HepG2 (cell line): ENCODE measurements at regions of chr17 and their contacts with region 1.

Region 1: GRCh38 chr17:17919169-17920107 is 52.8 kb downstream of the TOM1L2 start:
- DNase-seq: peak; percentile 75
- ATAC-seq: peak; percentile 75
- H3K4me3 ChIP-seq: no peak overlapping the region
- H3K27ac ChIP-seq: no peak overlapping the region
- H3K4me1 ChIP-seq: peaks cover 49% of the 10 kb centered on the region
- H3K27me3 ChIP-seq: no peaks in the 10 kb centered on the region
- CTCF ChIP-seq: peak; percentile 94
- EP300 ChIP-seq: no peak
- POLR2A ChIP-seq: no peak
- RAD21 ChIP-seq: peak; percentile 90

Region 2: GRCh38 chr17:17859909-17860765 is 59.3 kb before region 1 on chr17:
- CTCF ChIA-PET with region 1: interaction called, 8 read pairs
- POLR2A ChIA-PET with region 1: no interaction called
- in situ Hi-C with region 1: no loop called
- intact Hi-C with region 1: loop called (anchors 2 kb)
- DNase-seq: peak; percentile 57
- ATAC-seq: peak; percentile 88
- H3K4me3 ChIP-seq: no peak overlapping the region
- H3K27ac ChIP-seq: no peak overlapping the region
- H3K4me1 ChIP-seq: peaks cover 44% of the 10 kb centered on the region
- H3K27me3 ChIP-seq: no peaks in the 10 kb centered on the region
- CTCF ChIP-seq: peak; percentile 99
- EP300 ChIP-seq: no peak
- POLR2A ChIP-seq: no peak
- RAD21 ChIP-seq: peak; percentile 96

Region 3: GRCh38 chr17:17890773-17891759 is 28.4 kb before region 1 on chr17:
- CTCF ChIA-PET with region 1: interaction called, 53 read pairs
- POLR2A ChIA-PET with region 1: interaction called, 8 read pairs
- in situ Hi-C with region 1: no loop called
- intact Hi-C with region 1: loop called (anchors 1 kb)
- DNase-seq: peak; percentile 70
- ATAC-seq: peak; percentile 98
- H3K4me3 ChIP-seq: no peak overlapping the region
- H3K27ac ChIP-seq: no peak overlapping the region
- H3K4me1 ChIP-seq: peaks cover 2% of the 10 kb centered on the region
- H3K27me3 ChIP-seq: no peaks in the 10 kb centered on the region
- CTCF ChIP-seq: peak; percentile 97
- EP300 ChIP-seq: no peak
- POLR2A ChIP-seq: no peak
- RAD21 ChIP-seq: peak; percentile 94

Region 4: DNA sequence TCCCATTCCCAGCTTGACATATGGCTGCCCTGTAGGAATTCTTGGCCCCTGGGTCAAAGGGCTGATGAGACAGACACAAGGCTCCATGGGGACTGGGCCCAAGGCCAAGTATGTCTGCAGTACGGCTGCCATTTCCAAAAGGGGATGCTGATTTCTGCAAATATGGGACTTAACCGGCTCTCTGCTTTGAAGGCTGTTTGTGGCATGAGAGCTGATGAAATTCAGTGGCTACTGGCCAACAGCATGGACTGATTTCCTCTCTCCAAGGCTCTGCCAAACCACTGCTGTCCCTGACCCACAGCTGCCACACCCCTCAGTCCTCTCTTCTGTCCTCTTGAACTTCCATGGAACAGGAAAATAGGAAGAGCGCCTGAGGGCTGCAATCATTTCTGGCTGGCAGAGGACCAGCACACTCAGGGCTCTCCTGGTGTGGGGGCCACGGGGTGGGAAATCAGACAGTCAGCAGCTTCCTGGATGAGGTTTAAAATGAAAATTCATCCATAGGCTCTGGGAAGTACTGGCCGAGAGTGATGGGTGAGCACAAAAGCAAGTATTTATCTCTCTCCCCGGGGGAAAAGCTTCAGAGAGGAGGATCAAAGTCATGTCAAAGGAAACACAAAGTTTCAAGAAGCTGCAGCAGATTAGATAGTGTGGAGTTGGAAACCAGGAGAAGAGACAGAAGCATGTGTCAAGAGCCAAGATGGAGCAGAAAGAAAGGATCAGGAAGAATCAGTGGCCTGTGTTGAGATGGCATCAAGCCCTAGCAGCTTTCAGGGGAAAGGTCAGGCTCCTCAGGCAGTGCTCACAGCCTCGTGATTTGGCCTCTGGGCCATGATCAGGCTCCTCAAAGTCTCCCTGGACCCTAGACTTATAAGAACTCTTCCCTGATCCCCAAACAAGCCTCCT is 18.6 kb before region 1 on chr17:
- CTCF ChIA-PET with region 1: no interaction called
- POLR2A ChIA-PET with region 1: interaction called, 12 read pairs
- in situ Hi-C with region 1: no loop called
- intact Hi-C with region 1: no loop called
- DNase-seq: peak; percentile 96
- ATAC-seq: peak; percentile 93
- H3K4me3 ChIP-seq: peak overlapping the region in 1 of 3 experiments; percentile 4; a peak in 1 of 6 replicates
- H3K27ac ChIP-seq: peak overlapping the region; percentile 56
- H3K4me1 ChIP-seq: peaks cover 79% of the 10 kb centered on the region
- H3K27me3 ChIP-seq: no peaks in the 10 kb centered on the region
- CTCF ChIP-seq: no peak
- EP300 ChIP-seq: peak in 1 of 2 experiments; percentile 77; a peak in 2 of 4 replicates
- POLR2A ChIP-seq: no peak
- RAD21 ChIP-seq: no peak

Region 5: DNA sequence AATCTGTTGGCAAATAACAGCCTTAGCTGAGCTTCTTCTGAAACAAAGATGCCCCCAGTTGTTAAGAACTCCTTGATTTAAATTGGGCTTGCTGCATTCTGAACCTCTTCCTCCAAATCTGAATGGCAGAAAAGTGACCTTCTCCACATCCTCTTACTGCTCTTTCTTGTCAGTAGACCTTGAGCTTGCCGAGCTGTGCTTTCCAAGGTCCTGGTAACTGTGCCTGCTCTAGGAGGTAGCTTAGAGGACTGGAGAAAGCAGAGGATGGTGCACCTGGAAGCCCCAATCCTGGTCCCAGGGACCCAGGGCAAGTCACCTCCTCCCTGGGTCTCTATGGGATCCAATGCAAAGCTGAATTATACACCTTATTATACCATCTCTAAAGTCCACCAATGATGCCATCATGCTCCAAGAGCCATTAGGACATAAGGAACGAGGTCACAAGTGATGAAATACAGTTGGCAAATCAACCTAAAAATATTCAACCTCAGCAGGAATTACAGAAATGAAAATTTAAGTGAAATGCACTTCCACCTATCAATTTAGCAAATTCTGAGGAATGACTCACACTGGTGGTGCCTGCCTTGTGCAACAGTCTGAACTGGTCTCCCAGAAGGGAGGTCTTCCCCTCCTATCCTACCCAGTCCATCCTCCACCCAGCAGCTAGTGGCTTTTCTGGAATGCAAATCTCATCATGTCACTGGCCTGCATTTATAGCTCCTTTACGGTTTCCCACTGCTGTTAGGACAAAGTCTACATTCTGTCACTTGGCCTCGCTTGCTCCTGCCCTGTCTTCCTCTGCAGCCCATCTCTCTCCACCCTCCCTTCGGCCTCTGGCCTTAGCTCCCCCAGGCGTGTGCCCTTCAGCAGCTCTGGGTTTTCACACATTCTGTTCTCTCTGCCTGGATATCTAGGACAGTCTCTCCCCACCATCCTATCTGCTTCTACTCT is 16.2 kb after region 1 on chr17:
- CTCF ChIA-PET with region 1: no interaction called
- POLR2A ChIA-PET with region 1: no interaction called
- in situ Hi-C with region 1: no loop called
- intact Hi-C with region 1: loop called (anchors 2 kb)
- DNase-seq: peak; percentile 57
- ATAC-seq: peak; percentile 64
- H3K4me3 ChIP-seq: no peak overlapping the region
- H3K27ac ChIP-seq: no peak overlapping the region
- H3K4me1 ChIP-seq: peaks cover 43% of the 10 kb centered on the region
- H3K27me3 ChIP-seq: no peaks in the 10 kb centered on the region
- CTCF ChIP-seq: no peak
- EP300 ChIP-seq: no peak
- POLR2A ChIP-seq: no peak
- RAD21 ChIP-seq: no peak

Region 6: GRCh38 chr17:17972126-17972951 is 52.9 kb after region 1 on chr17 and contains the starts of genes DRC3 and TOM1L2:
- CTCF ChIA-PET with region 1: no interaction called
- POLR2A ChIA-PET with region 1: interaction called, 12 read pairs
- in situ Hi-C with region 1: no loop called
- intact Hi-C with region 1: loop called (anchors 5 kb)
- DNase-seq: peak; percentile 100
- ATAC-seq: peak; percentile 97
- H3K4me3 ChIP-seq: peak within 1 kb of the TSS; percentile 77 to 90 (median 90)
- H3K27ac ChIP-seq: no peak within 1 kb of the TSS
- H3K4me1 ChIP-seq: peaks cover 23% of the 10 kb centered on the region
- H3K27me3 ChIP-seq: peaks cover 4 to 13% of the 10 kb centered on the region in 2 experiments; a peak in 2 of 5 replicates
- CTCF ChIP-seq: no peak
- EP300 ChIP-seq: no peak; a peak in 1 of 4 replicates
- POLR2A ChIP-seq: peak; percentile 43 to 75; a peak in 3 of 4 replicates
- RAD21 ChIP-seq: 0 out of 2 replicates have a peak, but pooled peaks have one; percentile 25
- total RNA-seq, gene DRC3: 0.53 and 0.73 TPM in 2 replicates
- total RNA-seq, gene TOM1L2: 4.5 and 4.7 TPM in 2 replicates

Region 7: GRCh38 chr17:18033442-18034099 is 114.1 kb after region 1 on chr17:
- CTCF ChIA-PET with region 1: interaction called, 3 read pairs
- POLR2A ChIA-PET with region 1: no interaction called
- in situ Hi-C with region 1: no loop called
- intact Hi-C with region 1: loop called (anchors 2 kb)
- DNase-seq: peak; percentile 83
- ATAC-seq: peak; percentile 93
- H3K4me3 ChIP-seq: no peak overlapping the region
- H3K27ac ChIP-seq: no peak overlapping the region
- H3K4me1 ChIP-seq: peaks cover 34% of the 10 kb centered on the region
- H3K27me3 ChIP-seq: no peaks in the 10 kb centered on the region; a peak in 1 of 5 replicates
- CTCF ChIP-seq: peak; percentile 90
- EP300 ChIP-seq: no peak
- POLR2A ChIP-seq: no peak
- RAD21 ChIP-seq: peak; percentile 71